ENCODE measurements at regions of chr2 and their contacts with region 1.

Region 1: GRCh38 chr2:222797261-222797660 is 63.6 kb upstream of the ACSL3 start:
- DNase-seq: no peak
- ATAC-seq: no peak

Region 2: DNA sequence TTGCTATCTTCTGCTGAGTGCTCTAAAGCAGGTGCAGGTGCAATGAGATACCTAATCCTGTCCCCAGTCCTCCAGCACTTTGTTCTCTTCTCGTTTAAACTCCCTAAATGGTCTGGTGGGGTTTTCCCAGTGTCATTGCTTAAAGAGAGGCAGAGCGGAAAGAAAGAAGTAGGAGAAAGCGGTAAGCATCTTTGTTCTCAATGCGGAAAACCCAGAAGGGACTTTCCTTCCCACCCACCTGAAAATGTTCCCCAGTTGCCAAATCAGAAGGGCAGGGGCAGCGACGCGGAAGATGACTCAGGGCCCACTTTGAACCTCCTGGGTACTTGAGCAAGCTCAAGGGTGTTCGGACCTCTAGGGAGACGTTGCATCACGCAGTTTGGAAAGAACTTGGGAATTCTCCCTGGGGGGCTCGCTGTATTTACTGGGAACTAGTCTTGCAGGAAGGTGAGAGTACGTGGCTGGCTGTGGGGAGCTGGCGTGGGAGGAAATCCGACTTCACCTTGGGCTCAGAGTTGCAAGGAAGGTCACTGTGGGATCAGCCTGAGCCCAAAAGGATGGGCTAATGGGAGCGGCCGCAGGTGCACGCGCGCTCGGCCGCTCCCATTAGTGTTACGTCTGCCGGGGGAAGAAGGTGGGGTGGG is 373.5 kb before region 1 on chr2:
- intact Hi-C with region 1: no loop called
- DNase-seq: no peak
- ATAC-seq: no peak

Region 3: DNA sequence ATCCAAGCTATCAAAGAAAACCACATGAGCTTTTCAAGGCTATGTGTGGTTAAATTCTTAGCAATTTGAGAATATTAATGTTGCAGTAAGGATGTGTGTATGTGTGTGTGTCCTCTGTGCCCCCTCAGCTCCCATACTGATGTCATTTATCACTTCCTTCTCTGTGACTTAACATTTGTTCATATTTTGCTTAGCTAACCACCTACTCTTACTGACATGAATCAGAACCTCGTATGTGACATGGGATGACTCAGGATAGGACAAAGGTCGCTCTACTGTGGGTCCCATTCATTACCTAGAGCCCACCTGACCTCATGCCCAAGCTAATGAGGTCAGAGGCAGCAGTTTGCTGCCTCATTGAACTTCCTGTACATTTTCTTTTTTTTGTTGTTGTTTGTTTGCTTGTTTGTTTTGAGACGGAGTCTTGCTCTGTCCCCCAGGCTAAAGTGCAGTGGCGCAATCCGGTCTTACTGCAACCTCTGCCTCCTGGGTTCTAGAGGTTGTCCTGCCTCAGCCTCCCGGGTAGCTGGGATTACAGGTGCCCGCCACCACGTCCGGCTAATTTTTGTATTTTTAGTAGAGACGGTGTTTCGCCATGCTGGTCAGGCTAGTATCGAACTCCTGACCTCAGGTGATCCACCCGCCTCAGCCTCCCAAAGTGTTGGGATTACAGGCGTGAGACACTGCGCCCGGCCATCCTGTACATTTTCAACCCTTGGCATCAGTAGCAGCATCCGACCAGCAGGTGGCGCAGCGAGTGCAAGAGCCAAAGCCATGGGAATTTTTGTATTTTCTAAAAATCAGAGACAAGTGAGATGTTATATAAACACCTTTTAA is 89.4 kb before region 1 on chr2:
- intact Hi-C with region 1: loop called (anchors 2 kb)
- DNase-seq: peak; percentile 94
- ATAC-seq: peak; percentile 58